Left cardiac atrium (tissue), 4 donors: ENCODE measurements at regions of chr3 and their contacts with region 1.

Region 1: DNA sequence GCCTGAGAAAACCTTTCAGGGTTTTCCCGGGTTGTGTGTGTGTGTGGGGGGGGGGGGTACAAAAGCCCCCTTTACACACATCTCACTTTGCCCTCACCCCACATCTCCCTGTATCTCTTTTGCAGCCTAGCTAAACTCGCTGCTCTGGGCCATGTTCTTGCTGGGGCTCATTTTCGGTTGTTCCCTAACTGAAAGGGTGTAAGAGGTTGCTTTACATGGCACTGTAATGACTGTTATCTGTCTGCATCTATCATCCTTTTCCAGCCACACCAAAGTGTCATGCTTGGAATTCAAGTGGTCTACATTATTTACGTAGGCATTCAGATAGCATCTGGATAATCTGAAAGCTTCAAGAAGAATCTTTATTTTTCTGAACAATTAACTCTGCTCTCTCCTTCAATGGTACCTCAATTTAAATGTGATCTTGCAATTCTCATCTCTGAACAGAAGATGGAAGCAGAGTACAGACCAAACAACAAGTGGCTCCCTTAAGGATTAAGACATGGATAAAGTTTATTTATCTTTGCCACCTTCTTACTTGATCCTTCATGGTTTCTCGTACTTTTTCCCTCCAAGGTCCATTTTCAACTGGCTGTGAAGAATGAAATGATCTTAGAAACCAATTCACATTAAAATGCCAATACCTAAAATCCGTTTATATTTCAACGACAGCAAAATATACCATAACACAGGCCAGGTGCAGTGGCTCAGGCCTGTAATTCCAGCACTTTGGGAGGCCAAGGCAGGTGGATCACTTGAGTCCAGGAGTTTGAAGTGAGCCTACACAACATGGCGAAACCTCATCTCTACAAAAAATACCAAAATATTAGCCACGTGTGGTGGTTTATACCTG is 34.9 kb downstream of the DCLK3 start:
- DNase-seq: no peak
- ATAC-seq: peak; percentile 70 to 78

Region 2: GRCh38 chr3:36332139-36332538 is 397.3 kb before region 1 on chr3:
- intact Hi-C with region 1: no loop called
- DNase-seq: no peak
- ATAC-seq: no peak

Region 3: GRCh38 chr3:36777424-36778218 is 48.2 kb after region 1 on chr3:
- intact Hi-C with region 1: no loop called
- DNase-seq: no peak
- ATAC-seq: no peak

Region 4: DNA sequence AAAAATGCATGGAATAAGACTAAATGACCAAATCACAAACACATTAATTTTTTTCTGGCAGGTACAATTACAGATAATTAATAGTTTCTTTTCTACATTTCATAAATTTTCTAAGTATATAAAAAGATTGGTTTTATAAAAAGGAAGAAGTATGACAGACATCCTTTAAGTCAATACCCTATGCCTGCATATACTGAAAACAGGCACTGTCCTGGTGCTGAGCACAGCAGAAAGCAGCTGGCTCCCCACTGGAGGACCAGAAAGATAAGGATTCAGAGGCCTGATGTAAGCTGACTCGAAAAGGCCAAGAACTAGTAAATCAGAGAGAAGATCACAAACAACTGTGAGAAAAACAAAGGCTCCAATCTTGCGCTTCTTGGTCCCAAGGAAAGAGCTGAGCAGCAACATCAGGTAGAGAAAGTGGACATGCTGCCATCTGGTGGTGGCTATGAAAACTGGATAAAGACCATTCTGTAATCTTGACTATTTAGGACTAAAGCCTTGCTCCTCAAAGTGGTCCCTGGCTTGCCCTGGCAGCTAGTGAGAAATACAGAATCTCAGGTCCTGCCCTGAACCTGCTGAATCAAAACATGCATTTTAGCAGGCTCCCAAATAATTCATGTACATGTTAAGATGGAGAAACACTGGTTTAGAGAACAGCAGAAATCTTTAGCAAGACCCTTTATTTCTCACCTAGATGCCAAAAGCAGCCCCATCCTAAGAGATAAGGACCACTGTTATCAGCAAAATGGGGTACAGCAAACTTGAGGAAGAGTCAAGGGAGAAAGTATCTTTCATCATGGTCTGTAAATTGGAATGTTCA is 139.4 kb after region 1 on chr3:
- intact Hi-C with region 1: loop called (anchors 1 to 5 kb)
- DNase-seq: peak; percentile 42
- ATAC-seq: peak; percentile 71 to 78

Region 5: GRCh38 chr3:36944012-36944640 is 214.7 kb after region 1 on chr3:
- intact Hi-C with region 1: loop called in 1 of 2 experiments (anchors 10 kb)
- DNase-seq: peak; percentile 67
- ATAC-seq: peak; percentile 77 to 86

Region 6: GRCh38 chr3:36957862-36958686 is 228.6 kb after region 1 on chr3:
- intact Hi-C with region 1: loop called in 1 of 2 experiments (anchors 5 kb)
- DNase-seq: no peak
- ATAC-seq: peak; percentile 62 to 93